Vagina (tissue), 2 donors: ENCODE measurements at regions of chr13 and their contacts with region 1.

Region 1: GRCh38 chr13:32019612-32020233 is 11.9 kb upstream of the FRY start:
- DNase-seq: no peak
- H3K4me3 ChIP-seq: no peak overlapping the region
- H3K27ac ChIP-seq: no peak overlapping the region
- H3K4me1 ChIP-seq: peaks cover 4% of the 10 kb centered on the region
- H3K27me3 ChIP-seq: no peaks in the 10 kb centered on the region
- CTCF ChIP-seq: peak; percentile 7 to 55 (median 51)
- POLR2A ChIP-seq: no peak

Region 2: GRCh38 chr13:32080328-32080744 is 60.6 kb after region 1 on chr13:
- intact Hi-C with region 1: no loop called
- DNase-seq: no peak
- H3K4me3 ChIP-seq: no peak overlapping the region
- H3K27ac ChIP-seq: no peak overlapping the region
- H3K4me1 ChIP-seq: no peaks in the 10 kb centered on the region
- H3K27me3 ChIP-seq: no peaks in the 10 kb centered on the region
- CTCF ChIP-seq: no peak
- POLR2A ChIP-seq: no peak

Region 3: DNA sequence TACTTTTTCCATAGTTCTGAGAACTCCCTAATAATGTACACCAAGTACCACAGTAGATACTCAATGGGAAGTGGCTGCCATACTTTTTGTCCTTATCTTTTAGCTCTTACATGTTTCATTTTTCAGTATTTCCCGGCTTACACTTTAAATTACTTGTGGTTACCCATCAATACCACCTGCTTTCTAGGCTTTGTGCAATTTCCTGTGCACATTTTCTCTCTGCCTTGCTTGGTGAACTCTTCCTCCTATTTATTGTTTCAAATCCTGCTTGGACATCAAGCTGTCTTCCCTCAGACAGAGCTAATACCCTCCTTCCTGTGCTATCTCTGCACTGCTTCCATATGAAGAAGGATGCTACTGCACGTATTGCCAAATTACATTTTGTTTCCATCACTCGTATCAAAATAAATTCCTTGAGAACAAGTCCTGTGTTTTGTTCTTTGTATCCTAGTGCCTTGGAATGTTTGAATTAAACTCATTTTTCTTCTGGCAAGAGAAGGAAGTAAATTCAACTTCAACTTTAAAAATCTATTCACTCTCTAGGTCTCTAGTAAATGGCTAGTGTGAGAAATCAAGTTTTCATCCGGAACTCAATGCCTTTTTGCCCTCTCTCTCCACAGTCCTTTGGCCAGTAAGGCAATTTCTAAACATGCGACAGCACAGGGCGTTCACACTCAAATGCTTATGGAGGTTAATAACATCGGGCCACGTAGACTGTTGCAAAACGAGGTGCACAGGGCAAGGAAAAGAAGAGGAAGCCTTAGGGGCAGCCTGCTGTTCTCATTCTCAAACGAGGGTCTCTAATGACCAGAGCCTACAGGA is 289.8 kb after region 1 on chr13:
- intact Hi-C with region 1: loop called (anchors 5 kb)
- DNase-seq: no peak
- H3K4me3 ChIP-seq: peak overlapping the region; percentile 8 to 17
- H3K27ac ChIP-seq: peak overlapping the region; percentile 31
- H3K4me1 ChIP-seq: no peaks in the 10 kb centered on the region
- H3K27me3 ChIP-seq: no peaks in the 10 kb centered on the region
- CTCF ChIP-seq: no peak
- POLR2A ChIP-seq: no peak